Heart left ventricle (tissue), 16 donors: ENCODE measurements at regions of chr7 and their contacts with region 1.

Region 1: DNA sequence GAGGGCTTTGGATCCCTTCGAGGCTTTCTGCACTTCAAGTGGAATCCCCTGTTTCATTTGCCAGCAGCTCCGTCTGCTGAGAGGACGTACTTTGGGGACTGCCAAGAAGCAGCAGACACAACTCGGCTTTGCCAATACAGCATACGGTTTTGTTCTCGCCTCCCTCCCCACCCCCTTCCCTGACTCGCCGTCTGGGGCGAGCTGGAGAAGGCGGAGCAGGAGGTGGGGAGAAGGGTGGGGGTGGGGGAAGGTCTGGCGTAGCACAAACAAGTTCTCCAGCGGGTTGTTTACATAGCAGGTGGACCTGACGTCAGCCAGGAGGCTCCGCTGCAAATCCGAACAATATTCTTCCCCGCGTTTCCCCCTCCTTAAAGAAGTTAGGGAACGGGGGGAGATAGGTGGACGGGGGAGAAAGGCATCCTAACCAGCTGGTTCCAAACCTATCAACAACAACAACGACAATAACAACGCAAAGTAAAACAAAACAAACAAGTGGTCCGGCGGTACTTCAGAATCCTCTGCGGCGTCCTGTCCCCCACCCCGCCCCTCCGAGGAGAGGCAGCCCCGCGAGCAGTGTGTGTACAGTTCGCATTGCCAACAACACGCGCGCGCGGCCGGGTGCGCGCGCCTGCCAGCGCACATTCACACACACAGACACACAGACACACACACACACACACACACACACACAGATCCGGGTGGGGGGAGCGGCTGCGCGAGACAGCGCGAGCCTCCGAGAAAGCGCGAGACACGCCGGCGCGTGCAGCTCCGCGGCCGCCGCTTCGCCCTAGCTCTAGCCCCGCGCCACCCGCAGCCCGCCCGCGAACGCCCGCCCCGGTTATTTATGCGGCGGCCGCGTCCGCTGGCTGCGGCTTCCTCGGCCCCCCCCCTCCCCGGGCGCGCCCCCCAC is 167.0 kb upstream of the PPP1R3A start:
- DNase-seq: peak; percentile 70 to 89 (median 79)
- ATAC-seq: peak; percentile 77 to 90 (median 88)
- H3K4me3 ChIP-seq: peak overlapping the region; percentile 22 to 73 (median 61)
- H3K27ac ChIP-seq: peak overlapping the region; percentile 56 to 92 (median 79)
- H3K4me1 ChIP-seq: peaks cover 0 to 53% (median 11%) of the 10 kb centered on the region in 12 donors
- H3K27me3 ChIP-seq: peaks cover 5 to 97% (median 65%) of the 10 kb centered on the region in 9 donors
- CTCF ChIP-seq: no peak
- POLR2A ChIP-seq: no peak

Region 2: DNA sequence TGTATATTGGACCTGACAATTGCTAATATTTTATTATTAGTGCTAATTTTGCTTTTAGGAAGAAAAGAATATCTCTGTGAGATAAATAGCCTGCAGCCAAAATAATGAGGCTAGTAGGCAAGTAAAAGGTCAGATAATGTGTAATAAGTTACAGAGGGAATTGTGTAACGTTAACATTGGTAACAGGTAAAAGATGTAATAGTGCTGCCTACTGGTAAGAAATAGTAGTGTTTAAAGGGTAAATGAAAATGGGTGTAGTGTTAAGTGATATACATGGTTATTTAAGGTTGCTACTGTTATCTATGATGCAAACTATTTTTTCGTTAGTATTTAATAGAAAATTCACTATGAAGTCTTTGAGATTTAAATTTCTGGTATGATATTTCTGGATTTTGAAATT is 319.6 kb after region 1 on chr7:
- intact Hi-C with region 1: loop called in 5 of 10 experiments (anchors 10 kb)
- DNase-seq: no peak
- ATAC-seq: peak in 1 of 4 donors; percentile 61
- H3K4me3 ChIP-seq: no peak overlapping the region
- H3K27ac ChIP-seq: no peak overlapping the region
- H3K4me1 ChIP-seq: peaks cover 0 to 4% (median 0%) of the 10 kb centered on the region in 12 donors
- H3K27me3 ChIP-seq: no peaks in the 10 kb centered on the region
- CTCF ChIP-seq: peak in 6 of 12 donors; percentile 28 to 42 (median 38)
- POLR2A ChIP-seq: no peak

Region 3: GRCh38 chr7:114426382-114427223 is 340.8 kb after region 1 on chr7:
- intact Hi-C with region 1: loop called in 1 of 10 experiments (anchors 10 kb)
- DNase-seq: no peak
- ATAC-seq: peak in 1 of 4 donors; percentile 43
- H3K4me3 ChIP-seq: no peak overlapping the region
- H3K27ac ChIP-seq: no peak overlapping the region
- H3K4me1 ChIP-seq: no peaks in the 10 kb centered on the region
- H3K27me3 ChIP-seq: no peaks in the 10 kb centered on the region
- CTCF ChIP-seq: peak in 6 of 12 donors; percentile 12 to 42 (median 27)
- POLR2A ChIP-seq: no peak

Region 4: GRCh38 chr7:114548081-114548980 is 462.5 kb after region 1 on chr7:
- intact Hi-C with region 1: loop called in 1 of 10 experiments (anchors 10 kb)
- DNase-seq: no peak
- ATAC-seq: no peak
- H3K4me3 ChIP-seq: no peak overlapping the region
- H3K27ac ChIP-seq: no peak overlapping the region
- H3K4me1 ChIP-seq: no peaks in the 10 kb centered on the region
- H3K27me3 ChIP-seq: no peaks in the 10 kb centered on the region
- CTCF ChIP-seq: no peak
- POLR2A ChIP-seq: no peak

Region 5: GRCh38 chr7:114663502-114663901 is 577.7 kb after region 1 on chr7:
- intact Hi-C with region 1: loop called in 2 of 10 experiments (anchors 10 kb)
- DNase-seq: no peak
- ATAC-seq: no peak
- H3K4me3 ChIP-seq: no peak overlapping the region
- H3K27ac ChIP-seq: no peak overlapping the region
- H3K4me1 ChIP-seq: peaks cover 0 to 12% (median 0%) of the 10 kb centered on the region in 12 donors
- H3K27me3 ChIP-seq: no peaks in the 10 kb centered on the region
- CTCF ChIP-seq: peak in 5 of 12 donors; percentile 18 to 38 (median 23)
- POLR2A ChIP-seq: no peak